Lower leg skin (tissue), 4 donors: ENCODE measurements at regions of chr7 and their contacts with region 1.

Region 1: DNA sequence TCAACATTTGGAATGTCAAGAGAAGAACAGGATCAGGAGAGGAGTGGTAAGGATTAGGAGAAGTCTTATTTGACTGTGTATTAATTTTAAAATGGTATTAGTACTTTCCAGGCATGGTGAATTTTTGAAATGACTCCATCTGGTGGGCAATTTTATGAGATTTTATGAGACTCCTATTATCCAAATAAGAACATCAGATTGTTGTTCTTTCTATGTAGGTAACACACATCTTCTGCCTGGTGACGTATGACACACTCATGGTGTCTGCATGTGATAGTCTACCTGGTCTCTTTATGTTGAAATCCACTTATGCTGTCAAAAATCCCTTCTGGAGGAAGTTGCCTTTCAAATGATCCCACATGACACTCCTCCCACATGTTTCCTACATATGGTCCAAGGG is 50.9 kb downstream of the SLC13A1 start:
- DNase-seq: no peak
- H3K4me3 ChIP-seq: no peak overlapping the region
- CTCF ChIP-seq: no peak
- POLR2A ChIP-seq: no peak

Region 2: GRCh38 chr7:122329145-122329802 is 819.6 kb before region 1 on chr7:
- intact Hi-C with region 1: loop called (anchors 10 kb)
- DNase-seq: no peak
- H3K4me3 ChIP-seq: no peak overlapping the region
- CTCF ChIP-seq: no peak
- POLR2A ChIP-seq: no peak

Region 3: GRCh38 chr7:123096434-123096833 is 52.4 kb before region 1 on chr7:
- intact Hi-C with region 1: no loop called
- DNase-seq: no peak
- H3K4me3 ChIP-seq: no peak overlapping the region
- CTCF ChIP-seq: no peak
- POLR2A ChIP-seq: no peak